ENCODE measurements at regions of chr15 and their contacts with region 1.

Region 1: GRCh38 chr15:61834076-61834697 is 226.1 kb downstream of the VPS13C start:
- DNase-seq: peak; percentile 65 to 90 (median 85)
- H3K4me3 ChIP-seq: no peak overlapping the region
- H3K27ac ChIP-seq: no peak overlapping the region
- H3K4me1 ChIP-seq: no peaks in the 10 kb centered on the region
- H3K27me3 ChIP-seq: no peaks in the 10 kb centered on the region
- CTCF ChIP-seq: peak; percentile 69 to 84 (median 70)
- EP300 ChIP-seq: no peak
- POLR2A ChIP-seq: no peak

Region 2: DNA sequence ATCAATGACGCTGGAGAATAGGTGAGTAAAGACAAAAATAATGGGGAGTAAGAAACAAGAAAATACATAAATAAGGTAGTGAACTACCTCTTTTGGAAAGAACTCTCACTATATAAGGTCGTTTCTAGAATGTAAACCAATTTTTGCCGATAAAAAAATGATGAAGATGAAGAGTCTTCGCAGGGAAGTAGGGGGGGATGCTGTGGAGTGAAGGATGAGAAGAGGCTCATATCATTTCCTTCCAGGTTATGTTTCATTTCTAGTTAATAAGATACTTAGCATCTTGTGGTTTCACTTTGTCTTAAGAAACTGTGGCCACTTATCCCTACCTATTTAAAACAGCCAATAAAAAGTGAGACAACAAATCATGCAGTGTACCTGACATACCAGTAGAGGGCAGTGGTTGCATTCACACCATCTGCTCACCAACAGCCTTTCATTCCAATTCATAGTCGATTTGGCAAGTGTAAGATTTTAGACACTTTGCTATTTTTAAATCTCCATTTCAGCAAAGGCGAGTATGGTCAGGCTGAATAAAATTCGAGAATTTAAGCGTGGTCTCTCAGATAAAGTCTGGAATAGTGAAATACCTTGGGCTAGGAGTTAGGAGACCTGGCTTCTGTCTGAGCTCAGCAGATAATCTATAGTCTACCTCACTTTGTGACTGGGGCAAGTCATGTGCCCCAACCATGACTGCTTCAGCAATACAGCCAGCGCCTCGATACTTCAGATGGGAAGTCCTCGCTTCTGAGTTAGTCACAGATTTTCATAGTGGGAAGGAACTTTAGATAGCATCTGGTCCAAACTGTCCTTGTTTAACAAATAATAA is 1326.4 kb before region 1 on chr15:
- intact Hi-C with region 1: loop called in 3 of 4 experiments (anchors 5 to 10 kb)
- DNase-seq: peak in 2 of 5 donors; percentile 20 to 59
- H3K4me3 ChIP-seq: no peak overlapping the region
- H3K27ac ChIP-seq: no peak overlapping the region
- H3K4me1 ChIP-seq: no peaks in the 10 kb centered on the region
- H3K27me3 ChIP-seq: no peaks in the 10 kb centered on the region
- CTCF ChIP-seq: peak; percentile 83 to 89 (median 88)
- EP300 ChIP-seq: no peak
- POLR2A ChIP-seq: no peak

Region 3: DNA sequence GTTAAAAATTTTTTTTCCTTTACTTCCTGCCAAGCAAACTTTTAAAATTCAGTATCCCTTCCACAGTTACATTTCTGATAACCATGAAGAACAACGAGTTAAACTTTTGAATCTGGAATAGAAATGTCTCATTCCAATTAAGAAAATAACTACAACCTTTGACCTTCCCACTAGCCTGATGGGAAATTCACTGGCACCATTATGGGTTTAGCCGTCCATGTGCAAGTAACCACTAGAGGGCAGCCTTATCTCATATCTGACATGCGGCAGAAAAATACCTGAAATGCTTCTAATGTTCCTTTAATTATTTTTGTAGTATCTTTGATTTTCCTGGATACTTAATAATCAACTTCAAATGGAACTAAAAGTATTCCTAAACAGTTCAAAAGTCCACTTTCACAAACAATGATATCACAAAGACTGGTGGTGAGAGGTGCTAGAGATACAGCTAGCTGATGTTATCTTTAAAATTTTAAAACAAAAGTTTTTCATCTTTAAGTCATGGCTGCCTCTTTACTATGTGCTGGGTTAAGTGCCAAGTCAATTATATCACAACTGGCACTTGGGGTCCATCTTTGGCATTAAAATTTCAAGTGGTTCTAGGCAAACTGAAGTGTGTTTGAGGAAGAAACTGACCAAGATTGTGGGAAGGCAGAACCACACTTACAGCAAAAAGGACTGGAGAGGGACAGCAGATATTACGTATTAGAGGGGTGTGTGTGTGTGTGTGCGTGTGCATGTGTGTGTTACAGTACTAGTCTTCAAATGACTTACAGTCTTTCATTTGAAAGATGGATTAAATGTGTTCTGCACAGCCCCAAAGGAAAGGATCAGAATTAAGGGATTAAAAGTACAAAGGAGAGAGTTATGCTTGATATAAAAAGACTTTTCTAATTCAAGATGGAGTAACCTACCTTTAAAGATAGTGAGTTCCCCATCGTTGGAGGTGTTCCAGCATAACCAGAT is 1248.2 kb before region 1 on chr15:
- intact Hi-C with region 1: loop called in 2 of 4 experiments (anchors 10 kb)
- DNase-seq: peak in 4 of 5 donors; percentile 37 to 70 (median 44)
- H3K4me3 ChIP-seq: no peak overlapping the region
- H3K27ac ChIP-seq: no peak overlapping the region
- H3K4me1 ChIP-seq: peaks cover 8% of the 10 kb centered on the region
- H3K27me3 ChIP-seq: no peaks in the 10 kb centered on the region
- CTCF ChIP-seq: peak; percentile 50 to 91 (median 86)
- EP300 ChIP-seq: no peak
- POLR2A ChIP-seq: no peak

Region 4: GRCh38 chr15:61383421-61383820 is 450.8 kb before region 1 on chr15:
- intact Hi-C with region 1: no loop called
- DNase-seq: no peak
- H3K4me3 ChIP-seq: no peak overlapping the region
- H3K27ac ChIP-seq: no peak overlapping the region
- H3K4me1 ChIP-seq: no peaks in the 10 kb centered on the region
- H3K27me3 ChIP-seq: no peaks in the 10 kb centered on the region
- CTCF ChIP-seq: no peak
- EP300 ChIP-seq: no peak
- POLR2A ChIP-seq: no peak

Region 5: DNA sequence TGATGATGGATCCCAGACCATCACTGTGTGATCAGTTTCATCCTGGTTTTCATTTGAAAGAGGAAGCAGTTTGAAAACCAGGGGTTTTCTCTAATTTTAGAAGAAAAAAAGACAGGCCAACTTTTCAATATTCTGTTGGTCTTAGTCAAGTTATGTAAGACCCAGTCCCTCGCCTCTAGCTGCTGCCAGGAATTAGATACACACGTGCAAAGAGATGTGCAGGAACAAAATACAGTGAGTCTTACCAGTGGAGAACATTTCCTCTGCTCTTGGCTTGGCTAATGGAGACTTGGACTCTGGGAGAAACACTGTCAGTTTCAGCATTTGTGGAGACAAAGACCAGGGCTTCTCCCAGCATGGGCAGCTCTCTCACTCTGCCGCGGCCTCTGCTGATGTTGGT is 545.8 kb after region 1 on chr15:
- intact Hi-C with region 1: no loop called
- DNase-seq: no peak
- H3K4me3 ChIP-seq: no peak overlapping the region
- H3K27ac ChIP-seq: no peak overlapping the region
- H3K4me1 ChIP-seq: no peaks in the 10 kb centered on the region
- H3K27me3 ChIP-seq: no peaks in the 10 kb centered on the region
- CTCF ChIP-seq: no peak
- EP300 ChIP-seq: no peak
- POLR2A ChIP-seq: no peak

Measured in ovary (tissue), 10 donors.